GM13976 (cell line): ENCODE measurements at regions of chr12 and their contacts with region 1.

Region 1: DNA sequence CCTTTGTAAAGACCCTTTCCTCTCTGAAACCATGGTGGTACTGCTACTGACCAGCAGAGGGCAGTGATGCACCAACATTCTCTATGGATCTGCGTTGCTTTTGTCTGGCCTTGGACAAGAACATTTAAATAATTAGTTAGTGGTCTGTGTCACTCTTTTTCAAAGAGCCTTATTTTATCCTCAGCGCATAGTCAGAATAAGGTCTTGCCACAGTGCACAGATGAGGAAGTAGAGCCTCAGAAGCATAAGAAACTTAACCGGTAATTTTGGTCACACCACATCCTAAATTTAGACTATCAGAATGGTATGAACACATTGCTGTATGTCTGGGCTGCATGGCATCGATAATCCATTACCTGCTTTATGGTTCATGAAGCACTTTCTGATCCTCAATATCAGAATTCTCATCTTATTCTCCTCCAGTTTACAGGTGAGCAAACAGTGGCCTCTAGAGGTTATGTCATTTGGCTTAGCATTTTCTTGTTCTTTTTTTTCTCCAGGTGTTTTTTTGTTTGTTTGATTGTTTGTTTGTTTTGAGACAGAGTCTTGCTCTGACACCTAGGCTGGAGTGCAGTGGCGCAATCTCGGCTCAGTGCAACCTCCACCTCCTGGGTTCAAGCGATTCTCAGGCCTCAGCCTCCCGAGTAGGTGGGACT is 23.7 kb upstream of the IFT81 start:
- DNase-seq: peak; percentile 73
- CTCF ChIP-seq: peak; percentile 83

Region 2: GRCh38 chr12:110249716-110250225 is 149.3 kb after region 1 on chr12:
- in situ Hi-C with region 1: loop called (anchors 10 kb)
- DNase-seq: no peak
- CTCF ChIP-seq: no peak

Region 3: GRCh38 chr12:110426406-110426805 is 326.0 kb after region 1 on chr12:
- in situ Hi-C with region 1: loop called (anchors 10 kb)
- DNase-seq: no peak
- CTCF ChIP-seq: no peak